ENCODE measurements at regions of chr18 and their contacts with region 1.

Region 1: DNA sequence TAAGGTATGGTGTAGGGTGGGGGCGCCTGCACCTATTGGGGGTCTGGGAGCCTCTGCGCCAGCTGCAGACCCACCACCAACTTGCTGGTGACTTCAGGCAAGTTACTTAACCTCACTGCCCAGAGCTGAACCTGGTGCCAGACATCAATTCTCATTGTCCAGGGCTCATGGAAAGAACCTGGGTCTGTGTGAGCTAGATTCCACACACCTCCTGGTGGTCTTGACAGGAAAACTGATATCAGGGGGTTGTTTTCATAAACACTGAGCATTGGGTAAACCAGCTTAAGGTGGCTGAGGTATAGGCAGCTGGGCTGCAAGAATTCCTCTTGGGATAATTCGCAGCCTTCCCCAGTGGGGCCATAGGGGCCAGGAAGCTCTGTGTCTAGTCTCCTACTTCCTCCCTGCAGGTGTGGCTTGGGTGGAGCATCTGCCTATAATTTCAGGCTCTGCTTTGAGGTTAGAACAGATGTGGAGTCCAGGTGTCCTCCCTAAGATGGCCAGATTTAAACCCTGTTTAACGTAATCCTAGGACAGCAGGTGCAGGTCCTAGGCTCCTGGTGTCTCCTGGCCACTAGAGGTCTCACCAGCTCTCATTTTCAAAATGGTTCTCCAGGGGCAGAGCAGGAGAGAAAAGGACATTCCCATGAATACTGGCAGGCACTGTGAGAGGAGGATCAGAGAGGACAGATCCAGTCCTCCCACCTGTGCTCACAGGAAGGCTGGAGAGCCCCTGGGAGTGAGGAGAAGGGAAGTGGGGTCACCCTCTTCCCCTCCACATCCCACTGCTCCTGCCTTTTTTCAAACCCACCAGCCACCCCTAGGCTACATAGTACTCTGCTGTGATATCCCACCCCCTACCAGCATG is 100.4 kb upstream of the SMAD2 start:
- DNase-seq: peak; percentile 57
- H3K4me3 ChIP-seq: no peak overlapping the region
- H3K27ac ChIP-seq: no peak overlapping the region
- H3K4me1 ChIP-seq: peaks cover 0 to 6% (median 0%) of the 10 kb centered on the region in 4 donors
- H3K27me3 ChIP-seq: no peaks in the 10 kb centered on the region
- CTCF ChIP-seq: peak; percentile 50 to 71 (median 65)
- EP300 ChIP-seq: no peak
- POLR2A ChIP-seq: no peak

Region 2: DNA sequence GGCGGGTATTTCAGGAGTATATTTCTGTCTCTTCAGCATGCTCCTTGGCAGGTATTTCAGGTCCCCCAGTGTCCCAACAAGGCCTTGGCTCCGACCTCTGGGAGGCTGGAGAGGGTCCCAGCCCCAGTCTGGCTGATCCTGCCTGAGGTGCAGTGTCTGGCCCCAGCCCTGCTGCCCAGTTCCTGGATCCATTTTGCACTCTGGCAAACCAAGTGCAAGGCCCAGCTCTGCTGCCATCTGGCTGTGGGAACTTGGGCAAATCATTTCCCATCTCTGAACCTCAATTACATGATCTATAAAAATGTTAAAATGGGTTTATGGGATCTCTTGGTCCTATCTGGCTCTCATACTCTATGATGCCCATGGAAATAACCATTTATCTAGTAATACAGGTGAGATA is 314.7 kb after region 1 on chr18:
- in situ Hi-C with region 1: loop called in 2 of 4 experiments (anchors 25 kb)
- intact Hi-C with region 1: no loop called
- DNase-seq: peak; percentile 48
- H3K4me3 ChIP-seq: no peak overlapping the region
- H3K27ac ChIP-seq: no peak overlapping the region
- H3K4me1 ChIP-seq: no peaks in the 10 kb centered on the region
- H3K27me3 ChIP-seq: no peaks in the 10 kb centered on the region
- CTCF ChIP-seq: peak; percentile 19 to 50 (median 36)
- EP300 ChIP-seq: no peak
- POLR2A ChIP-seq: no peak

Region 3: DNA sequence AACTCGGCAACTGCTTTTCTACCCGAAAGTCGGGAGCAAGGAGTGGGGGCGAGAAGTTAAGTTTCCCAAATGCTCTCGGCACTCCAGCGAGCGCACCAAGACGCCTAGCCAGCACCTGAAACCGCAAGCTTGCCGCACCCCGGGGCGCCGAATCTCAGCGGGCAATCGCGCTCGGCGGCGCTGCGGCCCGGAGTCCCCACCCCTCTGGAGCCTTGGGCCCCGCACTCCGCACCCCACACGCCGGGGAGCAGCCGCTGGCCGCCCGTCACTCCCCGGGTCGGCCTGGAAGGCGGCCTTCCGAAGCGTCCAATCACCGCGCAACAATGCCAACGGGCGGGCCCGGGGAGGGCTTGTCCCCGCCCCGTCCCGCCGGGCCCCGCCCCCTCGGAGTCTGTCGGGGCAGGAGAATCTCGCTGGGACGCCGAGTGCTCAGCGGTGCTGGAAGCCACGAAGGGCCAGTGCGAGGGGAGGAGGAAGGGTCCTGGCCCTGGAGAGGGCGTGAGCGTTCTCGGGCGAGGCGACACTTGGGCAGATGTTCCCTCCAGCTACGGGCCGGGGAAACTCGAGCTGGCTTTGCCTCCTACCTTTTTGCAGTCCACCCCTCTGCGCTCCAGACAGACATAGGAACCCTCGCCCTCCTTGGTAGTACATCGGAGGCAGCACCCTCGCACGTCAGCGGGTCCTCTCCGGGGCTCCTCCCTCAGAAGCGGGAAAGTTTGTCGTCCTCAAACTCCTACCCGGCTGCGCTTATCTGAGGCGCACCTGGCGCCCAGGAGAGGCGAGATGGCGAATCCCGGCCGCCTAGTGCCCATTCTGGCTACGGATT is 379.5 kb after region 1 on chr18:
- in situ Hi-C with region 1: no loop called
- intact Hi-C with region 1: loop called (anchors 1 kb)
- DNase-seq: peak; percentile 91
- H3K4me3 ChIP-seq: peak overlapping the region; percentile 67 to 83 (median 74)
- H3K27ac ChIP-seq: peak overlapping the region; percentile 56 to 76 (median 60)
- H3K4me1 ChIP-seq: peaks cover 5 to 19% (median 16%) of the 10 kb centered on the region in 4 donors
- H3K27me3 ChIP-seq: peaks cover 82% of the 10 kb centered on the region
- CTCF ChIP-seq: peak in 1 of 5 experiments; percentile 25
- EP300 ChIP-seq: no peak
- POLR2A ChIP-seq: no peak

Region 4: GRCh38 chr18:48445540-48445939 is 414.7 kb after region 1 on chr18:
- in situ Hi-C with region 1: loop called (anchors 5 to 10 kb)
- intact Hi-C with region 1: loop called (anchors 5 kb)
- DNase-seq: peak; percentile 83
- H3K4me3 ChIP-seq: no peak overlapping the region
- H3K27ac ChIP-seq: no peak overlapping the region
- H3K4me1 ChIP-seq: peaks cover 0 to 7% (median 3%) of the 10 kb centered on the region in 4 donors
- H3K27me3 ChIP-seq: peaks cover 20% of the 10 kb centered on the region
- CTCF ChIP-seq: peak; percentile 73 to 87 (median 81)
- EP300 ChIP-seq: no peak
- POLR2A ChIP-seq: no peak